PC-9 (cell line): ENCODE measurements at regions of chr5 and their contacts with region 1.

Region 1: GRCh38 chr5:55524816-55525215 is 9.9 kb downstream of the PLPP1 start:
- DNase-seq: no peak
- H3K4me3 ChIP-seq: no peak overlapping the region
- H3K27ac ChIP-seq: no peak overlapping the region
- H3K4me1 ChIP-seq: 0 out of 2 replicates have a peak, but pooled peaks cover 7% of the 10 kb centered on the region
- H3K27me3 ChIP-seq: no peaks in the 10 kb centered on the region
- CTCF ChIP-seq: no peak

Region 2: GRCh38 chr5:55608595-55609349 is 84.0 kb after region 1 on chr5:
- CTCF ChIA-PET with region 1: no interaction called
- POLR2A ChIA-PET with region 1: interaction called, 11 read pairs
- intact Hi-C with region 1: no loop called
- DNase-seq: no peak
- H3K4me3 ChIP-seq: no peak overlapping the region
- H3K27ac ChIP-seq: no peak overlapping the region
- H3K4me1 ChIP-seq: peaks cover 20% of the 10 kb centered on the region
- H3K27me3 ChIP-seq: no peaks in the 10 kb centered on the region
- CTCF ChIP-seq: no peak

Region 3: GRCh38 chr5:55621229-55621628 is 96.4 kb after region 1 on chr5:
- CTCF ChIA-PET with region 1: no interaction called
- POLR2A ChIA-PET with region 1: no interaction called
- intact Hi-C with region 1: no loop called
- DNase-seq: no peak
- H3K4me3 ChIP-seq: no peak overlapping the region
- H3K27ac ChIP-seq: no peak overlapping the region
- H3K4me1 ChIP-seq: peaks cover 23% of the 10 kb centered on the region
- H3K27me3 ChIP-seq: no peaks in the 10 kb centered on the region
- CTCF ChIP-seq: no peak